ENCODE measurements at regions of chr6 and their contacts with region 1.

Region 1: DNA sequence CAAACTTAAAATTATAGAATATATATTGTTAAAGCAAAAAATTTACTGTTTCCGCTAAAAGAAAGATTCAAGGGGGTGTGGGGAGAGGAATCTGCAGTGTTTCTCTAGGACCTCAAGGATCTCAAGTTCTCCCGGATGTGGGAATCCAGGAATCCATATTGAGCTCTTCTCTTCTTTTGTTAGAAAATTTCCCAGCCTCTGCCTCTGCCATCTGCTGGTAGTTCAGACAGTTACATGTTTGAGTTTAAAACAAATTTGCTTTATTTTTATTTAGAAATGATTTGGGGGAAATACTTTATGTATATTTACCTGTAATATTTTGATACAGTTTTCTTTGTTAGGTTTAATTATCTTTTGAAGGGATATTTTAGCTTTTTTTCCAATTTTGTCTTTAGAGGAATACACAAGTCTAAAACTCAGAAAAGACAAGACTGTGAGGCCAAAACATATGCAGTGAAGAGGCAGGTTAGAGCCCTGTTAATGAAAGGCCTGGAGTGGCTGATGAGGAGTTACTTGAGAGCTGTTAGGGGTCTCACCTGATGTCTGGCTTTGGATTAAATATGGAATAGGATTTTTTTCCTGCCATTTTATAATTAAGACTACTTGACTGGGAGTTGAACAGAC is 268.8 kb downstream of the ARID1B start:
- DNase-seq: peak; percentile 82
- ATAC-seq: peak; percentile 81
- H3K4me3 ChIP-seq: no peak overlapping the region
- H3K27ac ChIP-seq: no peak overlapping the region
- H3K4me1 ChIP-seq: peaks cover 8% of the 10 kb centered on the region
- H3K27me3 ChIP-seq: no peaks in the 10 kb centered on the region
- CTCF ChIP-seq: peak; percentile 68
- POLR2A ChIP-seq: no peak
- RAD21 ChIP-seq: peak; percentile 58

Region 2: GRCh38 chr6:157094038-157094437 is 48.1 kb after region 1 on chr6:
- CTCF ChIA-PET with region 1: interaction called, 4 read pairs
- POLR2A ChIA-PET with region 1: no interaction called
- dilution Hi-C with region 1: no loop called
- in situ Hi-C with region 1: no loop called
- intact Hi-C with region 1: loop called (anchors 5 kb)
- DNase-seq: no peak
- ATAC-seq: no peak
- H3K4me3 ChIP-seq: no peak overlapping the region
- H3K27ac ChIP-seq: no peak overlapping the region
- H3K4me1 ChIP-seq: peaks cover 4% of the 10 kb centered on the region
- H3K27me3 ChIP-seq: no peaks in the 10 kb centered on the region
- CTCF ChIP-seq: no peak
- POLR2A ChIP-seq: no peak
- RAD21 ChIP-seq: no peak

Measured in IMR-90 (cell line).